ENCODE measurements at regions of chr9 and their contacts with region 1.

Region 1: DNA sequence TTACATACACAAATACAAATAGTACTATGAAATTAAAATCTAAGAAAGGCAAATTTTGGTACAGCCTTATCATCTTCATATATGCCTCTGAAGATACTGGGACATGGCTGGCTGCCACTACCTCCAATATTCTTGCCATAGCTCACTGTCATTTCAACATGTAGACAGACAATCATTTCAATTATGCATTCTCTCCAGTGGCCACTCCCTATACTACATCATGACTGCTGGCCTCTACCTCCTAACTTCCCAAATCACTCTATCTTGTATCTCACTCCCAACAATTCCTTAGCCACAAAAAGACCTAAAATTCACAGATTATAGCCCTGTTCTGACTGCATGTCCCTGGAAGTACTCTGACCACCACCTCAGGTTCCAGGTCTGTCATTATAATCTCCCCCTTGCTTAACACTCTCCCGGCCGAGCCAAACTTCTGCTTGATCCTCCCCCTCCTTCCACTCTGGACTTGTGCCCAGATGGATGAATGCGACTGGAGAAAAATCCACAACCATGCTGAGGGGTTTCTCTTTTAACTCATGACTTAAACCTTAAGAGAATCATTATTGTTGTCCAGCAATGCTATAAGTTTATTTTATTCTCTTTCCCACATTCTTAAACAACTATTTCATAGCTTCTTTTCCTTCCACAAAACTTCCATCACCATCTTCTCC is 225.3 kb upstream of the TLE4 start:
- DNase-seq: no peak
- H3K4me3 ChIP-seq: no peak overlapping the region
- H3K27ac ChIP-seq: no peak overlapping the region
- H3K4me1 ChIP-seq: no peaks in the 10 kb centered on the region
- H3K27me3 ChIP-seq: no peaks in the 10 kb centered on the region
- CTCF ChIP-seq: no peak
- POLR2A ChIP-seq: no peak

Region 2: GRCh38 chr9:80555782-80556325 is 1209.4 kb after region 1 on chr9:
- intact Hi-C with region 1: loop called (anchors 5 kb)
- DNase-seq: no peak
- H3K4me3 ChIP-seq: no peak overlapping the region
- H3K27ac ChIP-seq: no peak overlapping the region
- H3K4me1 ChIP-seq: no peaks in the 10 kb centered on the region
- H3K27me3 ChIP-seq: no peaks in the 10 kb centered on the region
- CTCF ChIP-seq: no peak
- POLR2A ChIP-seq: no peak